ENCODE measurements at regions of chr5 and their contacts with region 1.

Region 1: DNA sequence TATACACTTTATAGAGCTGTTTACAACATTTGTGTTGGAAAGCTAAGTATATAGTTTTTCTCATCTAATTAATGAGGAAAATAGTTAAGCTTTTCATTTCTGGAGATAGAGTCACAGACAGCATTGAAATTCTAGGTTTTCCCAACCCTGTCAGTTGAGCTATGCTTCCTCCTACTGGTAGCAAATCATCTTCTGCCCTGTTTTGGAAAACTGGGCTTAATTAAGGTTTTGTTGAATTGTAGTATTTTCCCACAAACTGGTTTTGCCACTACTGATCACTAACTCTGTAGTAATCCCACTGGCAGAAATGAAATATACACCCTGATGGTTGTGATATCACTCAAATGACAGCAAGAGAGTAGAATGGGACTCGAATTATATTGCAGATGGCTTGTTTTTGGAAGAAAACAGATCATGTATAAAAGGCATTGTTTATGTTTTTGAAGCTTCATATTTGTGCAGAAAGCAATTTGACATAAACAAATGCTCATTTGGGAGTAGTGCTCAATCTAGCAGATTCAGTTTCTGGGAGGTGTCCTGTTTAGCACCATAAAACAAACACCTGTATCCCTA is 46.6 kb downstream of the CD180 start:
- DNase-seq: no peak
- H3K4me3 ChIP-seq: no peak overlapping the region
- H3K27ac ChIP-seq: peak overlapping the region; percentile 14
- H3K4me1 ChIP-seq: no peaks in the 10 kb centered on the region
- H3K27me3 ChIP-seq: no peaks in the 10 kb centered on the region
- CTCF ChIP-seq: peak in 2 of 3 experiments; percentile 21 to 33
- POLR2A ChIP-seq: no peak

Region 2: GRCh38 chr5:66814146-66814991 is 335.7 kb before region 1 on chr5:
- intact Hi-C with region 1: loop called (anchors 10 kb)
- DNase-seq: no peak
- H3K4me3 ChIP-seq: no peak overlapping the region
- H3K27ac ChIP-seq: no peak overlapping the region
- H3K4me1 ChIP-seq: no peaks in the 10 kb centered on the region
- H3K27me3 ChIP-seq: no peaks in the 10 kb centered on the region
- CTCF ChIP-seq: peak; percentile 43 to 61 (median 48)
- POLR2A ChIP-seq: no peak

Region 3: DNA sequence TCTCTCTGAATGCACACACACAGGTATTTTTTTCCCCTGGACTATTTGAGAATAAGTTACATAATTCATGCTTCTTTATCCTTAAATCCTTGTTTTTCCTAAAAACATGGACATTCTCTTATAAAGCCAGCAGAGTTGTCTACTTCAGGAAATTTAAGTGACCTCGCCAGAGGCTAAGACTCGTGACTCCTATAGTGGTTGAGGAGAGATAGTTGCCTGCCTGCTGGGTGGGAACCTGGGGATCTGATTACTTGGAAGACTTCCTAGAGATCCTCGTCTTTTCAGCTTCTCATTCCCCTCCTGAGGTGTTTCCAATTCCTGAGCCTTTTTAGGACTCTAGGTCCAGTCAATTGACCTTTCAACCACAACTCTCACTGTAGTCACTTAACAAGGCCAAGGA is 1949.3 kb after region 1 on chr5:
- intact Hi-C with region 1: no loop called
- DNase-seq: no peak
- H3K4me3 ChIP-seq: no peak overlapping the region
- H3K27ac ChIP-seq: no peak overlapping the region
- H3K4me1 ChIP-seq: peaks cover 29% of the 10 kb centered on the region
- H3K27me3 ChIP-seq: no peaks in the 10 kb centered on the region
- CTCF ChIP-seq: no peak
- POLR2A ChIP-seq: no peak